GM12878 (cell line): ENCODE measurements at regions of chr9 and their contacts with region 1.

Region 1: DNA sequence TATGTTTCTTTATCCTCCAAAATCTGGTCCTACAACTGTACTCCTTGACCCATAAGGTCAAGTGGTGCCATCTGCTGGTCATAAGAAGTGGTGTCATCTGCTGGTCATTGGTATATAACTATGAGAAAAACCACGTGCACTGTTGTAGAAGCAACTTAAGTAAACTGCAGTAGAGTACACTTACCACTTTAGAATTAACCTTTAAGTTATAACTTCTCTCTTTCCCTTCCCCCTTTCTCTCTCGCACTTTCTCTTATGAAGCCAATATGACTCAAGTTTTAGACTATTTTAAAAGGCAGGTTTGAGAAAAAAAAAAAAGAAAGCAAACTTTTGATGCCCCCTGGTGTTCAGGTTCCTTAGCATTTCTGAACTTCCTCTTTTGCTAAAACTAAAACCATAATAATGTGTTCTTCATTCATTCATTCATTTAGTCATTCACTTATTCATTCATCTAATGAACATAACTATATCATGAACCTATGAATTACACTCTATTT is 12.8 kb upstream of the MTAP start:
- DNase-seq: peak; percentile 40
- ATAC-seq: peak; percentile 100
- H3K4me3 ChIP-seq: no peak overlapping the region
- H3K27ac ChIP-seq: no peak overlapping the region
- H3K4me1 ChIP-seq: no peaks in the 10 kb centered on the region
- H3K27me3 ChIP-seq: peaks cover 0 to 5% of the 10 kb centered on the region in 2 experiments; a peak in 2 of 4 replicates
- CTCF ChIP-seq: peak; percentile 63 to 72 (median 66)
- EP300 ChIP-seq: no peak
- POLR2A ChIP-seq: no peak
- RAD21 ChIP-seq: peak; percentile 74

Region 2: GRCh38 chr9:21465859-21466518 is 323.6 kb before region 1 on chr9:
- CTCF ChIA-PET with region 1: interaction called, 15 read pairs
- POLR2A ChIA-PET with region 1: no interaction called
- RAD21 ChIA-PET with region 1: interaction called, 6 read pairs
- SMC1A ChIA-PET with region 1: interaction called, 9 read pairs
- in situ Hi-C with region 1: loop called (anchors 5 kb)
- intact Hi-C with region 1: loop called (anchors 1 kb)
- DNase-seq: no peak
- ATAC-seq: peak; percentile 83
- H3K4me3 ChIP-seq: no peak overlapping the region
- H3K27ac ChIP-seq: no peak overlapping the region
- H3K4me1 ChIP-seq: no peaks in the 10 kb centered on the region
- H3K27me3 ChIP-seq: no peaks in the 10 kb centered on the region
- CTCF ChIP-seq: peak; percentile 60 to 68 (median 66); a peak in 5 of 6 replicates
- EP300 ChIP-seq: no peak
- POLR2A ChIP-seq: no peak
- RAD21 ChIP-seq: peak; percentile 81

Region 3: GRCh38 chr9:22265038-22265437 is 475.4 kb after region 1 on chr9:
- CTCF ChIA-PET with region 1: no interaction called
- POLR2A ChIA-PET with region 1: no interaction called
- RAD21 ChIA-PET with region 1: no interaction called
- SMC1A ChIA-PET with region 1: no interaction called
- in situ Hi-C with region 1: no loop called
- intact Hi-C with region 1: no loop called
- DNase-seq: no peak
- ATAC-seq: no peak
- H3K4me3 ChIP-seq: no peak overlapping the region
- H3K27ac ChIP-seq: no peak overlapping the region
- H3K4me1 ChIP-seq: no peaks in the 10 kb centered on the region
- H3K27me3 ChIP-seq: no peaks in the 10 kb centered on the region
- CTCF ChIP-seq: no peak
- EP300 ChIP-seq: no peak
- POLR2A ChIP-seq: no peak
- RAD21 ChIP-seq: no peak